Activated CD4-positive, alpha-beta T cell treated with anti-CD3 and anti-CD28 coated beads, Interleukin-2, amount 10 ng/mL, durations not matched to agents 7 days and 5 days (primary cell): ENCODE measurements at regions of chr19 and their contacts with region 1.

Region 1: GRCh38 chr19:44723952-44724319 is 24.6 kb upstream of the BCL3 start:
- DNase-seq: peak; percentile 80
- H3K4me3 Mint-ChIP-seq: no peak overlapping the region
- H3K27ac Mint-ChIP-seq: peak overlapping the region; percentile 55
- H3K4me1 Mint-ChIP-seq: peaks cover 45% of the 10 kb centered on the region
- H3K27me3 Mint-ChIP-seq: no peaks in the 10 kb centered on the region

Region 2: DNA sequence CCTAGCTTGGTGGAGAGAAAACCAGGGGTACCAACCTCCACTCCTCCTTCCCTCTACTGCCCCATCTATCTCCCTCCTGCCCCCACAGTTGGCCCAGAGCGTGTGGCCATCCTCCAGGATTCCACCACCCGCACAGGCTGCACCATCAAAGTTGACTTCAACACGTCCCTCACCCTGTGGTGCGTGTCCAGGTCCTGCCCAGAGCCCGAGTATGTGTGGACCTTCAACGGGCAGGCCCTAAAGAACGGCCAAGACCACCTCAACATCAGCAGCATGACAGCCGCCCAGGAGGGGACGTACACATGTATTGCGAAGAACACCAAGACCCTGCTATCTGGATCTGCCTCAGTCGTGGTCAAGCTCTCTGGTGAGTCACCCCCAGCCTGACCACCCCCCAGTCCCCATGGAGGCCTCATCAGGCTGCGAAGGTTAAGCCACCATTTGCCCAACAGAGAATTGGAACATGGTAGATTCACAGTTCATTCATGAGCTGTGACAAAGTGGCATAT is 18.4 kb before region 1 on chr19:
- CTCF ChIA-PET with region 1: interaction called, 13 read pairs
- POLR2A ChIA-PET with region 1: no interaction called
- DNase-seq: no peak
- H3K4me3 Mint-ChIP-seq: no peak overlapping the region
- H3K27ac Mint-ChIP-seq: no peak overlapping the region
- H3K4me1 Mint-ChIP-seq: no peaks in the 10 kb centered on the region
- H3K27me3 Mint-ChIP-seq: no peaks in the 10 kb centered on the region

Region 3: DNA sequence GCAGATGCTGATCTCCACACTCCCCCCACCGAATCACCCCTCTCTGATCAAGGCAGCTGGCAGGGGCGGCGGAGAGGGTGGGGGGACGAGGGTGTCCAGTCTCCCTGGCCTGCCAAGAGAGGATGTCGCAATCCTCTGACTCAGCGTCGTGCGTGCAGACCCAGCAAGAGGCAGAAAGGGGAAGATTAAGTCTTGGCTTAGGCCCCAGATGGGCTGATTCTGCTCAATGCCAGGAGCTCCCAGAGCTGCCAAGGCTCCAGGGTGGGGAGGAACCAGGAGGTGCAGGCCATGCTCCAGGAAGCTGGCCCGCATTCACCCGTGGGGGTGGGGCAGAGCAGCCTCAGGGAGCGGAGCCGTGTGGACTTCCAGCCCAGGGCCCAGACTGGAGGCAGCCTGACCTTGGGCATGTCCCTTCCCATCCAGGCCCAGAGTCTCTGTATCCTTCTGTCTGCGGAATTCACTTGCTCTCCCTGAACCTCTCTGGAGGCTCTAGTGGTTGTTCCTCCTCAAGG is 18.0 kb after region 1 on chr19:
- CTCF ChIA-PET with region 1: interaction called, 39 read pairs
- POLR2A ChIA-PET with region 1: interaction called, 5 read pairs
- DNase-seq: no peak
- H3K4me3 Mint-ChIP-seq: no peak overlapping the region
- H3K27ac Mint-ChIP-seq: no peak overlapping the region
- H3K4me1 Mint-ChIP-seq: peaks cover 14% of the 10 kb centered on the region
- H3K27me3 Mint-ChIP-seq: peaks cover 4% of the 10 kb centered on the region

Region 4: DNA sequence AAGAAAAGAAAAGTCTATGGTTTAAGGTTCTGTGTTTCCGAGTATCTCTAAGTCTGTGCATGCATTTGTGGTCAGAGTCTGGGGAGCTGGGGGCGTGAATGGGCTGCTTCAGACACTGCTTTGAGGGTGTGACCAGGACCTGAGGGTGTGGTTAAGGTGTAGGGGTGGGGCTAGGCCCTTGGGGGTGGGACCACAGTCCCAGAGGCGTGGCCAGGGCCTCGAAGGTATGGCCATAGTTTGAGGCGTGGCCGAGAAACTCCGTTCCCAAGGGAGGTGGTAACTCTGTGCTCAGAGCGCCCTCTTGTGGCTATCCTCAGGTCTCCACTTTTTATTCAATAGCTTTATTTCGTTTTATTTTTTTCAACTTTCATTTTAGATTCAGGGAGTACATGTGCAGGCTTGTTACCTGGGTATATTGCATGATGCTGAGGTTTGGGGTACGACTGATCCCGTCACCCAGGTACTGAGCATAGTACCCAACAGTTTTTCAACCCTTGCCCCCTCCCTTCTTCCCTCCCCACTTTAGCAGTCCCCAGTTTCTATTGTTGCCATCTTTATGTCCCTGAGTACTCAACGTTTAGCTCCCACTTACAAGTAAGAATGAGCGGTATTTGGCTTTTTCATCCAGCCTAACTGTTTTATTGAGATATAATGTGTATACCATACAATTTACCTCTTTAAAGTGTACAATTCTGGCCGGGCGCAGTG is 46.8 kb after region 1 on chr19:
- CTCF ChIA-PET with region 1: interaction called, 222 read pairs
- POLR2A ChIA-PET with region 1: interaction called, 7 read pairs
- DNase-seq: peak; percentile 99
- H3K4me3 Mint-ChIP-seq: peak overlapping the region; percentile 59
- H3K27ac Mint-ChIP-seq: peak overlapping the region; percentile 87
- H3K4me1 Mint-ChIP-seq: peaks cover 37% of the 10 kb centered on the region
- H3K27me3 Mint-ChIP-seq: peaks cover 8% of the 10 kb centered on the region